ENCODE measurements at regions of chr5 and their contacts with region 1.

Region 1: GRCh38 chr5:151651997-151652645 is 34.6 kb downstream of the SPARC start:
- DNase-seq: peak; percentile 80
- H3K4me3 ChIP-seq: no peak overlapping the region
- H3K27ac ChIP-seq: no peak overlapping the region
- H3K4me1 ChIP-seq: no peaks in the 10 kb centered on the region
- H3K27me3 ChIP-seq: peaks cover 0 to 4% of the 10 kb centered on the region in 2 experiments
- CTCF ChIP-seq: peak; percentile 88 to 92
- POLR2A ChIP-seq: no peak

Region 2: GRCh38 chr5:151384106-151384505 is 268.0 kb before region 1 on chr5:
- CTCF ChIA-PET with region 1: interaction called, 17 read pairs
- POLR2A ChIA-PET with region 1: no interaction called
- dilution Hi-C with region 1: no loop called
- intact Hi-C with region 1: loop called (anchors 1 kb)
- DNase-seq: no peak
- H3K4me3 ChIP-seq: no peak overlapping the region
- H3K27ac ChIP-seq: no peak overlapping the region
- H3K4me1 ChIP-seq: no peaks in the 10 kb centered on the region
- H3K27me3 ChIP-seq: no peaks in the 10 kb centered on the region
- CTCF ChIP-seq: no peak
- POLR2A ChIP-seq: no peak

Region 3: DNA sequence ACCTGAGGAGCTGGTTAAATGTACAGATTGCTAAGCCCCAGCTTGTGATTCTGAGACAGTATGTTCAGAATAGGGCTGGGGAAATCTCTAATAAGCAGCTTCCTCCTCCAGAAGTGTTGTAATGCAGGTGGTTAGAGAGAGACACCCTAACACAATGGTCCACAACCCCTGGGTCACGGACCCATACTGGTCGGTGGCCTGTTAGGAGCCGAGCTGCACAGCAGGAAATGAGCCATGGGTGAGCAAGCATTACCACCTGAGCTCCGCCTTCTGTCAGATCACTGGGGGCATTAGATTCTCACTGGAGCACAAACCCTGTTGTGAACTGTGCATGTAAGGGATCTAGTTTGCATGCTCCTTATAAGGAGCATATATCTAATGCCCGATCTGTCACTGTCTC is 142.9 kb before region 1 on chr5:
- CTCF ChIA-PET with region 1: interaction called, 14 read pairs
- POLR2A ChIA-PET with region 1: no interaction called
- dilution Hi-C with region 1: no loop called
- intact Hi-C with region 1: no loop called
- DNase-seq: peak; percentile 29
- H3K4me3 ChIP-seq: no peak overlapping the region
- H3K27ac ChIP-seq: no peak overlapping the region
- H3K4me1 ChIP-seq: peaks cover 7% of the 10 kb centered on the region
- H3K27me3 ChIP-seq: no peaks in the 10 kb centered on the region
- CTCF ChIP-seq: no peak
- POLR2A ChIP-seq: no peak

Region 4: GRCh38 chr5:151637676-151638075 is 14.4 kb before region 1 on chr5:
- CTCF ChIA-PET with region 1: interaction called, 39 read pairs
- POLR2A ChIA-PET with region 1: no interaction called
- dilution Hi-C with region 1: no loop called
- intact Hi-C with region 1: no loop called
- DNase-seq: no peak
- H3K4me3 ChIP-seq: no peak overlapping the region
- H3K27ac ChIP-seq: no peak overlapping the region
- H3K4me1 ChIP-seq: peaks cover 8% of the 10 kb centered on the region
- H3K27me3 ChIP-seq: peaks cover 3 to 4% of the 10 kb centered on the region in 2 experiments
- CTCF ChIP-seq: no peak
- POLR2A ChIP-seq: no peak

Region 5: DNA sequence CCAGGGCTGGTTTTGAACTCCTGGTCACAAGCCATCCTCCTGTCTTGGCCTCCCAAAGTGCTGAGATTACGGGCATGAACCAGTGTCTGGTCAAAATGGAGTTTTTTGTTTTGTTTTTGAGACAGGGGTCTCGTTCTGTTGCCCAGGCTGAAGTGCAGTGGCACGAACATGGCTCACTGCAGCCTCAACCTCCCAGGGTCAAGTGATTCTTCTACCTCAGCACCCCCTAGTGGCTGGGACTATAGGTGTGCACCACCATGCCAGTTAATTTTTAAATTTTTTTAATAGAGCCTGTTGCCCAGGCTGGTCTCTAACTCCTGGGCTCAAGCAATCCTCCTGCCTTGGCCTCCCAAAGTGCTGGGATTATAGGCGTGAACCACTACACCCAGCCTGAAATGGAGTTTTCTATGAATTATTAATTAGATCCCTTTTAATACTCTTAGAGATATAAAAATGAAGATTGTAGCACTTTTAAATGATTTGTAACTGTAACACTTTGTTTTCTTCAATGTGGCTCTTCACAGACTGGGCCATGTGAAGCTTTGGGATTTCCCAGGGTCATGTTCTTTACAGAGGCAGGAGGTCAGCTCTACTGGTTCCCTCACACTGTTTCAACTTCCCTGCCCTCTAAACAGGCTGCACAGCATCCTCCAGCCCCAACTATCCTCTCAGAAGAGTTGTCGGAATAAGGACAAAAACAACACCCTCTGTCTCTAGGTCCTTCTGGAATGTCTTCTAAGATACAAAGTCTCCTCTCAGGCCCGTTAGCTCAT is 67.3 kb after region 1 on chr5:
- CTCF ChIA-PET with region 1: interaction called, 173 read pairs
- POLR2A ChIA-PET with region 1: no interaction called
- dilution Hi-C with region 1: no loop called
- intact Hi-C with region 1: no loop called
- DNase-seq: peak; percentile 60
- H3K4me3 ChIP-seq: no peak overlapping the region
- H3K27ac ChIP-seq: no peak overlapping the region
- H3K4me1 ChIP-seq: no peaks in the 10 kb centered on the region
- H3K27me3 ChIP-seq: no peaks in the 10 kb centered on the region
- CTCF ChIP-seq: peak; percentile 52 to 67
- POLR2A ChIP-seq: no peak